Dorsolateral prefrontal cortex (tissue), 120 donors: ENCODE measurements at regions of chrX and their contacts with region 1.

Region 1: GRCh38 chrX:120250522-120251271 is at the start of gene ZBTB33:
- DNase-seq: peak; percentile 60 to 89 (median 82)
- H3K4me3 ChIP-seq: peak within 1 kb of the TSS; percentile 37 to 81 (median 68)
- H3K27ac ChIP-seq: peak within 1 kb of the TSS in 58 of 59 donors; percentile 16 to 91 (median 81)
- H3K27me3 ChIP-seq: peaks cover 0 to 38% (median 7%) of the 10 kb centered on the region in 45 donors
- CTCF ChIP-seq: peak; percentile 17 to 81 (median 66)
- total RNA-seq, gene ZBTB33: 13.8 to 40.5 (median 22.4) TPM

Region 2: GRCh38 chrX:120090208-120090607 is 160.5 kb before region 1 on chrX:
- intact Hi-C with region 1: no loop called
- DNase-seq: no peak
- H3K4me3 ChIP-seq: no peak overlapping the region
- H3K27ac ChIP-seq: no peak overlapping the region
- H3K27me3 ChIP-seq: peaks cover 0 to 38% (median 6%) of the 10 kb centered on the region in 45 donors
- CTCF ChIP-seq: no peak

Region 3: DNA sequence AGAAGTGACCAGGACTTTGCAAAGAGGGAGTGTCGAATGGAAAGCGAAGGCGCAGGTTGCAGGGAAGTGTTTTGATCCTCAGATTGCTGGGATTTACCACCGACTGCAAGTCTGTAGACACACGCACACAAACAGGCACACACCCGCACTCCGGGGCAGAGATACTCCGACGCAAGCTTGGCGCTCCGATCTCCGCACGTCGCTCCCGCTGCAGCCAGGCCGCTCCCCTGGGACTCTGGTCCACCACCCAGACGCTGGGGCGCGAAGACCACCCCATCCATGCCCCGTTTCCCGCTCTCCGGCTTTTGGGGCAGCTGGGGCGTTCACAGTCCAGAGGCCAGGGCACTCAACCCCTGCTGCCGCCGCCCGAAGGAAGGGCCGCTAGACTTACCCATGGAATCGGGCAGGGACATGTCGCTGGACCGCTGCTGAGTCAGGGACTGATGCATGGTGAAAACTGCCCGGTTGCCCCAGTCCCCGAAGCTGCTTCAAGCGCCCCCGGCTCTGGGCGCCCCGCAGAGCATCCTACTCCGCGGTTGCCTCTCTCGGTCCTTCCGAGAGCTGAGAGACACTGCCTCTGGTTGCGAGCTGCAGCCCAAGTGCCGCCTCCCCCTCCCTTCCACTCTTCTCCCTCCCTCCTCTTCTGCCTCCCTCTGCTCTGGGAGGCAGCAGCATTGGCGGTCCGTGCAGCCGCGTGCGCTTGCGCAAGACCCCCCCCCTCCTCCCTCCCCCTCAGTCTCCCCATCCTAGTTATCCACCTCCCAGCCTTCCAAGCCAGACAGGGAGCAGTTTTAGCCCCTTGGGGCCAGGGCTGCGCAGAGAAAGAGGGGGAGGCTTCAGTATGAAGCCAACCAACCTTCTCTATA is 60.4 kb after region 1 on chrX and contains the start of gene TMEM255A:
- intact Hi-C with region 1: loop called in 1 of 2 experiments (anchors 2 kb)
- DNase-seq: peak in 8 of 10 donors; percentile 20 to 58 (median 40)
- H3K4me3 ChIP-seq: peak within 1 kb of the TSS; percentile 15 to 73 (median 53)
- H3K27ac ChIP-seq: peak within 1 kb of the TSS in 1 of 59 donors; percentile 27
- H3K27me3 ChIP-seq: peaks cover 0 to 95% (median 47%) of the 10 kb centered on the region in 45 donors
- CTCF ChIP-seq: peak in 2 of 56 donors; percentile 14 to 15
- total RNA-seq, gene TMEM255A: 2.5 to 12.3 (median 6.3) TPM

Region 4: GRCh38 chrX:120477453-120477852 is 226.8 kb after region 1 on chrX:
- intact Hi-C with region 1: loop called (anchors 10 kb)
- DNase-seq: no peak
- H3K4me3 ChIP-seq: no peak overlapping the region
- H3K27ac ChIP-seq: no peak overlapping the region
- H3K27me3 ChIP-seq: peaks cover 0 to 48% (median 14%) of the 10 kb centered on the region in 45 donors
- CTCF ChIP-seq: no peak